SK-N-SH (cell line): ENCODE measurements at regions of chr20 and their contacts with region 1.

Region 1: GRCh38 chr20:34312544-34313217 is 9.5 kb upstream of the AHCY start:
- DNase-seq: peak; percentile 91
- H3K4me3 ChIP-seq: peak overlapping the region; percentile 30 to 55; a peak in 3 of 4 replicates
- H3K27ac ChIP-seq: no peak overlapping the region
- H3K4me1 ChIP-seq: peaks cover 0 to 4% of the 10 kb centered on the region in 2 experiments; a peak in 2 of 4 replicates
- H3K27me3 ChIP-seq: no peaks in the 10 kb centered on the region
- CTCF ChIP-seq: peak; percentile 99
- EP300 ChIP-seq: no peak
- RAD21 ChIP-seq: peak; percentile 99

Region 2: DNA sequence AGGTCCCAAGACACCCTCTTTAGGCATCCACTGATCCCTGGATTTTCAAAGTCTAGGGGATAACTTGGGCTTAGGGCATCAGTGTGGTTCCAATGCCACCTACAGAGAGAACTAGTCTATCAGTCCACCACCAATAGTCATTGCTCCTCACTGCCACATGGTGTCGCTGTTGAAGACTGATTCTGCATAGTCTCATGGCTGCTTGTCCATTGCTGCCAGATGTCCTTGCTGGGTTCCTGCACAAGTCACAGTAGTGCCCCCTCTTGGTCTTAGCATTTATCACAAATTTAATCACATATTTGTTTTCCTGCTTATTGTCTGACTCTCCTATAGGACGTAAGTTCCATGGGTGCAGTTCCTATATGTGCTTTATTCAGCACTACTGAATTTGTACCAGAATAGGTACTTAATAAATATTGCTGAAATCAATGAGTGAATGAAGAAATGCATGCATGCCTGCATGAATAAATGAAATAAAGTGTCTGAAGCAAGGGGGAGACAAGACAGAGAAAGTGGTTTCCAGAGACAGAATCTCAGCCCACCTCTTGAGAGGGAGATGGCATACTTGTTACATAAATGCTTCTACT is 364.9 kb before region 1 on chr20:
- CTCF ChIA-PET with region 1: no interaction called
- POLR2A ChIA-PET with region 1: no interaction called
- DNase-seq: peak; percentile 53
- H3K4me3 ChIP-seq: no peak overlapping the region
- H3K27ac ChIP-seq: no peak overlapping the region
- H3K4me1 ChIP-seq: no peaks in the 10 kb centered on the region
- H3K27me3 ChIP-seq: no peaks in the 10 kb centered on the region
- CTCF ChIP-seq: peak; percentile 59
- EP300 ChIP-seq: no peak
- RAD21 ChIP-seq: peak; percentile 53

Region 3: DNA sequence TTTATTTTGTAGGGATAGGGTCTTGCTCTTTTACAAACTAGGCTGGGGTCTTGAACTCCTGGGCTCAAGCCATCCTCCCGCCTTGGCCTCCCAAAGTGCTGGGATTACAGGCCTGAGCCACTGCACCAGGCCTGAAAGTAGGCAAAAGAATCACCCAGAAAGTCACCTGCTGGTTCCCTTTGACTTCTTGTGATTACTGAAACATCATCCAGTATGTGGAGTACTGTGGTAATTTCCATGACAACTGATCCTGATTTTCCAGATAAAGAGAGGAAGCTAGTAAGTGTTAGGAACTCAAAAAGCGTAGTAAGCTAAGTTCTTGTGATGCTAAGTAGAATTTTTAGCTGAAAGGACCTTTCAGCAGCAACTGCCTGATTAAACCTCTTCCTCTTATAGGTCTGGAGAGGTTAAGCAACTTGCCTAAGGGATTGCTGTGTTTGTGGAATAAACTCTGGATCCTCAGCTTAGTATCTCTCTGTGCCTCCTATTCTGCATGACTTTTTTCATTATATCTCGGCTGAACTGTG is 302.2 kb before region 1 on chr20:
- CTCF ChIA-PET with region 1: no interaction called
- POLR2A ChIA-PET with region 1: no interaction called
- DNase-seq: no peak
- H3K4me3 ChIP-seq: no peak overlapping the region
- H3K27ac ChIP-seq: peak overlapping the region in 1 of 2 experiments; percentile 55; a peak in 2 of 4 replicates
- H3K4me1 ChIP-seq: peaks cover 13 to 30% of the 10 kb centered on the region in 2 experiments
- H3K27me3 ChIP-seq: no peaks in the 10 kb centered on the region
- CTCF ChIP-seq: no peak
- EP300 ChIP-seq: no peak
- RAD21 ChIP-seq: no peak

Region 4: DNA sequence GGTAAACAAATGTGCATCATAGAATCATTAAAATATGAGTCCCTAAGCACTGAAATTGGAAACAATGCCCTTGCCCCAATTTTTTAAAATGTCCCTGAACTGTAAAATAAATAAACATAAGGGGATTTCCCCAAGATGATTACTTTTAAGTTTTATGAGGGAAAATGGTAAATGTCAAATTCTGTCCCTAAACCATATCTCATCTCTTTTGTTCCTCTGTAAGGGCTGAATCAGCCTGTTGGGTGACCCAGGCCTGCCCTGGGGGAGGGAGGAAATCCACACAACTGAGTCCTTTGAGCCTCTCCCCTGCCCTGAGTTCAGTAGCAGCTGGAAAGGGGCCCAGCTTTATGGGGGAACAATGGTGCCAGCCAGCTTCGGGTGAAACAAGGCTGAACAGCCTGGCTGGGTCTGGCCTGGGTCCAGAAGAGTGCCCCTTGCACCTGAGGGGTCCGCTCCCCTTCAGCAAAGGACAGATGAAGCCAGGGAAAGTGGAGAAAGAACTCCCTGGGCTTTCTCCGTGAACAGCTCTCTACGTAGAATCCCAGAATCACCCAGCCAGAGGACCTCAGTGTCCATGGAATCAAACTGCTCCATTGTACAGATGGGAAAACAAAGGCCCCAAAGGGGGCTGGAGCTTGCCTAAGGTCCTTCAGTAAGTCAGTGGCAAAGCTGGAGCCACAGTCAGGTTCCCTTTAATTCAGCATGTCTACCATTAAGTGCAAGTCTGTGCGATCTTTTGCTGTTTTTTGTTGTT is 22.1 kb after region 1 on chr20:
- CTCF ChIA-PET with region 1: interaction called, 40 read pairs
- POLR2A ChIA-PET with region 1: no interaction called
- DNase-seq: no peak
- H3K4me3 ChIP-seq: no peak overlapping the region
- H3K27ac ChIP-seq: no peak overlapping the region
- H3K4me1 ChIP-seq: no peaks in the 10 kb centered on the region
- H3K27me3 ChIP-seq: no peaks in the 10 kb centered on the region
- CTCF ChIP-seq: no peak
- EP300 ChIP-seq: no peak
- RAD21 ChIP-seq: no peak

Region 5: GRCh38 chr20:34452281-34452982 is 139.8 kb after region 1 on chr20:
- CTCF ChIA-PET with region 1: interaction called, 19 read pairs
- POLR2A ChIA-PET with region 1: no interaction called
- DNase-seq: peak; percentile 36
- H3K4me3 ChIP-seq: no peak overlapping the region
- H3K27ac ChIP-seq: peak overlapping the region; percentile 39 to 43; a peak in 2 of 4 replicates
- H3K4me1 ChIP-seq: peaks cover 4 to 7% of the 10 kb centered on the region in 2 experiments; a peak in 2 of 4 replicates
- H3K27me3 ChIP-seq: no peaks in the 10 kb centered on the region
- CTCF ChIP-seq: no peak
- EP300 ChIP-seq: no peak
- RAD21 ChIP-seq: no peak

Region 6: DNA sequence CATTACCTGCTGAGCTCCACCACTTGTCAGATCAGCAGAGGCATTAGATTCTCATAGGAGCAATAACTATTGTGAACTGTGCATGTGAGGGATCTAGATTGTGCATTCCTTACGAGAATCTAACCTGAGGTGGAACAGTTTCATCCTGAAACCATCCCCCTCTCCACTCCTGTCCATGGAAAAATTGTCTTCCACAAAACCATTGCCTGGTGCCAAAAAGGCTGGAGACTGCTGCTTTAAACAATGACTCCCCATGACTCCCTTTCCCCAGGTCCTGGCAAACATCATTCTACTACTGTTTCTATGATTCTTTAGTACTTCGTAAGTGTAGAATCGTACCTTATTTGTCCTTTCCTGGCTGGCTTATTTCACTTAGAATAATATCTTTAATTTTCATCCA is 193.8 kb after region 1 on chr20:
- CTCF ChIA-PET with region 1: interaction called, 14 read pairs
- POLR2A ChIA-PET with region 1: no interaction called
- DNase-seq: no peak
- H3K4me3 ChIP-seq: no peak overlapping the region
- H3K27ac ChIP-seq: no peak overlapping the region
- H3K4me1 ChIP-seq: no peaks in the 10 kb centered on the region; a peak in 1 of 4 replicates
- H3K27me3 ChIP-seq: no peaks in the 10 kb centered on the region
- CTCF ChIP-seq: no peak
- EP300 ChIP-seq: no peak
- RAD21 ChIP-seq: no peak

Region 7: GRCh38 chr20:34558320-34559218 is 245.9 kb after region 1 on chr20 and contains the start of gene MAP1LC3A:
- CTCF ChIA-PET with region 1: interaction called, 13 read pairs
- POLR2A ChIA-PET with region 1: interaction called, 3 read pairs
- DNase-seq: peak; percentile 99
- H3K4me3 ChIP-seq: peak within 1 kb of the TSS; percentile 73 to 77
- H3K27ac ChIP-seq: peak within 1 kb of the TSS; percentile 45 to 61; a peak in 2 of 4 replicates
- H3K4me1 ChIP-seq: peaks cover 0 to 9% of the 10 kb centered on the region in 2 experiments; a peak in 1 of 4 replicates
- H3K27me3 ChIP-seq: no peaks in the 10 kb centered on the region
- CTCF ChIP-seq: no peak
- EP300 ChIP-seq: no peak
- RAD21 ChIP-seq: no peak
- polyA plus RNA-seq, gene MAP1LC3A: 17.2 and 24.9 TPM in 2 replicates